ENCODE measurements at regions of chr9 and their contacts with region 1.

Region 1: GRCh38 chr9:110256380-110257096 is at the start of gene TXN:
- DNase-seq: peak; percentile 82
- H3K4me3 Mint-ChIP-seq: peak within 1 kb of the TSS; percentile 95
- H3K27ac Mint-ChIP-seq: peak within 1 kb of the TSS; percentile 99
- H3K4me1 Mint-ChIP-seq: peaks cover 49% of the 10 kb centered on the region
- H3K27me3 Mint-ChIP-seq: no peaks in the 10 kb centered on the region
- total RNA-seq, gene TXN: 539 and 551 TPM in 2 replicates

Region 2: DNA sequence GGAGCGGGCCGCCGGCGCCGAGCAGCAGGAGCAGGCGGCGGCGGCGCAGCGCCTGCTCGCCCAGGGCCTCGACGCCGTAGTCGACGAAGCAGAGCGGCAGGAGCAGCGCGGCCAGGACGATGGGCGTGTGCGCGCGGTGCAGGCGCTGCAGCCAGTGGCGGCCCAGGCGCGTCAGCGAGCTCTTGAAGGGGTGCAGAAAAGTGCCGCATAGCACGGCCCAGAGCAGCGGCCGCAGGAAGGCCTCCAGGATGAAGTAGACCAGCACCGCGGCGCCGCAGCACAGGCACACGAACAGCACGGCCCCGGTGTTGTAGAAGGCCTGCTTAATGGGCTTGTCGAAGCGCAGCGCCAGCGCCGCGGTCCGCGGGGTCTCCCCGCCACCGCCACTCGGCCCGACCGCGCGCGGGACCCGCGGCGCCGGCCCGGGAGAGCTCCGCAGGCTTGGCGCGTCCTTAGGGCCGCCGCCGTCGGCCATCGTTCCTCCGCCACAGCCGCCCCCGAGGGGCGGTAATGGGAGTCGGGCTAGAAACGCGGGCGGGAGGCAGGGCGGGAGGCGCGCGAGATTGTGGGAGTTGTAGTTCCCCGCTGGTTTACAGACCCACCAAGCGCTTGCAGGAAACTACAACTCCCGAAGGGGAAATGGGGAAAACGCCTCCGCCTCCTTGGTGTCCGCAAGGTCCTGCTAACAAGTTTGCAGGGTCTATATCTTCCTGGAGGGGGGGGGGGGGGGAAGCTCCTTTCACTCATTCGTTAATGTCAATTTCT is 1136.9 kb before region 1 on chr9 and contains the start of gene TMEM245:
- intact Hi-C with region 1: loop called (anchors 10 kb)
- DNase-seq: peak; percentile 93
- H3K4me3 Mint-ChIP-seq: peak within 1 kb of the TSS; percentile 84
- H3K27ac Mint-ChIP-seq: peak within 1 kb of the TSS; percentile 83
- H3K4me1 Mint-ChIP-seq: peaks cover 36% of the 10 kb centered on the region
- H3K27me3 Mint-ChIP-seq: no peaks in the 10 kb centered on the region
- total RNA-seq, gene TMEM245: 24.0 and 25.8 TPM in 2 replicates

Region 3: GRCh38 chr9:109894921-109895758 is 361.4 kb before region 1 on chr9:
- intact Hi-C with region 1: loop called (anchors 2 kb)
- DNase-seq: no peak
- H3K4me3 Mint-ChIP-seq: peak overlapping the region; percentile 50
- H3K27ac Mint-ChIP-seq: peak overlapping the region; percentile 91
- H3K4me1 Mint-ChIP-seq: peaks cover 45% of the 10 kb centered on the region
- H3K27me3 Mint-ChIP-seq: no peaks in the 10 kb centered on the region

Region 4: DNA sequence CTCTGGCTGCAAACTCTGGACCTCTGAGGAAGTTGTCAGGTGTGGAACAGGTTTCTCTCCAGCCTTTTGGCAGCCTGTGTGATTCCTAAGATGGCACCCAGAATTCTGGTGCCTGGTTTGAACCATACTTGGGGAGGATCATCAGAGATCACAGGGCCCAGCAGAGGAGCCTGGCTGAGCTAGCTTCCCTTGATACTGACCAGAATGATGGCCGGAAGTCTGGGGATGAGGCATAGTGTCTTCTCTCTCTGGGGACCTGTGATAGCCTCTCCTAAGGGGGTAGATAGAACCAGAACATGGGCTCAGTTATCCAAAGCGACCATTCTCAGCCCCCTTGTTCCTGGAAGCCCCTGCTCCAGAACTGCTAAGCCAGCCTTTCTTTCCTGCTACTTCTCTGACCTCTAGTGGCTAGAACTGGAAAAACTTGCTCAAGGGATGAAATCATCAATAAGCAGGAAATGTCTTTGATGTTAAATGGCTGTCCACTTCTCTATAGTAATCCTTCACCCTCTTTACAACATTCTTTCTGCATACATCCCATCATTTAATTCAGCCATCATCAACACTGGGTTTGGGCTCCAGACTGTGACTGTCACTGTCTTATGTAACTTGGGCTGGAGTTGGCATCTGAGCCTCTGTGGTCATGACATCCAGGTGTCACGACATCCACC is 103.7 kb before region 1 on chr9:
- intact Hi-C with region 1: loop called (anchors 5 kb)
- DNase-seq: no peak
- H3K4me3 Mint-ChIP-seq: peak overlapping the region; percentile 37
- H3K27ac Mint-ChIP-seq: peak overlapping the region; percentile 77
- H3K4me1 Mint-ChIP-seq: peaks cover 95% of the 10 kb centered on the region
- H3K27me3 Mint-ChIP-seq: no peaks in the 10 kb centered on the region

Region 5: DNA sequence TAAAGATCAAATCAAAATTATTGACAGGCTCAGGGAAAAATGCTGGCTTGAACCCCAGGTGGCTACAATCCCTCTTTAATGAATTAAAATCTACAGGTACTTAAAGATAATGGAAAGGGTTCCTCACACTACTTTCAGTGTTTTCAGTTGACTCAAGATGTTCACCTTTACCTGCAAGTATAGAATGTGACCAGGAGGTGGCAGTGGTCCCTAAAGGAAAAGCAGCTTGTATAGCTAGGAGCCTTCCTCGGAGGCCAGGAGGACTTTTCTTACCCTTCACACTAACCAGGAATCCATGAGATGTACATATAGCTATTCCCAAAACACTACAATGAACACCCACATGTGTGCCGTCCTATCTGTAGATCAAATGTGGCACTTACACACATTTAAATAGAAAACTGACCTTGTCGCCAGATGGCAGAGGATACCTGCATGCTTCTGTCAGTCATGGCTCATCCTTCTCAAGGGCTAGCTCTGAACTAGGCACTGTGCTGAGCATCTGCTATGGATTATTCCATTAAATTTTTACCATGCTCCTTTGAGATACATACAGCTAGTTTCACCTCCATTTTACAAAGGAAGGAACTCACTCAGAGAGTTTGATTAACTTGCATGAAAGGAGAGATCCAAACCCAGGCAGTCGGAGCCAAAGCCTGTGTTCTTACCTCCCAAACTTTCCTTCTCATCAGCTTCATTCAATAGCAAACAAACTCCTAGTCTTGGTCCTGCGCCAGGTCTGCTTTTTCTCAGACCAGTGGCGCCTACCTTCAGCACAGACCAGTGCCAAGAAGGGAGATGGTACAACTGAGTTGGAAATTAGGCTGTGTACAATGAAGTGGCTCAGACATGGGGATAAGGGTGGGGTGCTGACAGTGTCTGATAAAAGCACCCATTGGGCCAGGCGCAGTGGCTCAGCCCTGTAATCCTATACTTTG is 73.1 kb before region 1 on chr9:
- intact Hi-C with region 1: no loop called
- DNase-seq: peak; percentile 28
- H3K4me3 Mint-ChIP-seq: no peak overlapping the region
- H3K27ac Mint-ChIP-seq: no peak overlapping the region
- H3K4me1 Mint-ChIP-seq: peaks cover 15% of the 10 kb centered on the region
- H3K27me3 Mint-ChIP-seq: no peaks in the 10 kb centered on the region

Region 6: DNA sequence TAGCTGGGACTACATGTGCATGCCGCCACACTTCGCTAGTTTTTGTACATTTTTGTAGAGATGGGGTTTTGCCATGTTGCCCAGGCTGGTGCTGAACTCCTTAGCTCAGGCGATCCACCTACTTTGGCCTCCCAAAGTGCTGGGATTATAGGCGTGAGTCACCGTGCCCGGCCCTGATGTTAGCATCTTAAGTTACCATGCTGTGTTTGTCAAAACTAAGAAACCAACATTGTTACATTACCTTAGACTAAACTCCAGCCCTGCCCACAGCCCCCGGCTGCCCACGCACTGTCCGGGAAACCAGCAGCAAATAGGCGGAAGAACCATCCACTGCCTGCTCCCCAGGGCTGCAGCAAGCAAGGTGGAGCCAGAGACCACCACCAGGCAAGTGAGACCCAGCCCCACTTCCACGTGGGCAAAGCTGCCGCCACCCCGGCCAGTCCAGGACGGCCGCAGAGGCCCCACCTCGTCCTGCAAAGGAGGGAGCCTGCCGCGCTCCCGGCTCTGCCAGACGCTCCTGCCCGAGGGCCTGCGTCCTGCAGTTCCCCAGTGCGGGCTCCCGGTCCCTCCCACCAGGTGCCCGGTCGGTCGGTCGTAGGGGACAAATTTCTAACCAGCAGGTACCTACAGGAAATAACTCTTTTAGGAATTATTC is 35.5 kb after region 1 on chr9:
- intact Hi-C with region 1: no loop called
- DNase-seq: no peak
- H3K4me3 Mint-ChIP-seq: no peak overlapping the region
- H3K27ac Mint-ChIP-seq: no peak overlapping the region
- H3K4me1 Mint-ChIP-seq: peaks cover 2% of the 10 kb centered on the region
- H3K27me3 Mint-ChIP-seq: no peaks in the 10 kb centered on the region

Region 7: GRCh38 chr9:110895147-110895905 is 638.8 kb after region 1 on chr9:
- intact Hi-C with region 1: no loop called
- DNase-seq: no peak
- H3K4me3 Mint-ChIP-seq: no peak overlapping the region
- H3K27ac Mint-ChIP-seq: no peak overlapping the region
- H3K4me1 Mint-ChIP-seq: no peaks in the 10 kb centered on the region
- H3K27me3 Mint-ChIP-seq: no peaks in the 10 kb centered on the region

Region 8: GRCh38 chr9:111483862-111484571 is 1227.5 kb after region 1 on chr9 and contains the start of gene ECPAS:
- intact Hi-C with region 1: loop called (anchors 5 kb)
- DNase-seq: peak; percentile 59
- H3K4me3 Mint-ChIP-seq: peak within 1 kb of the TSS; percentile 84
- H3K27ac Mint-ChIP-seq: peak within 1 kb of the TSS; percentile 82
- H3K4me1 Mint-ChIP-seq: peaks cover 23% of the 10 kb centered on the region
- H3K27me3 Mint-ChIP-seq: peaks cover 9% of the 10 kb centered on the region
- total RNA-seq, gene ECPAS: 96.8 and 107 TPM in 2 replicates